CD4-positive, alpha-beta memory T cell (primary cell): ENCODE measurements at regions of chr1 and their contacts with region 1.

Region 1: GRCh38 chr1:8409106-8409505 is 91.2 kb downstream of the SLC45A1 start:
- DNase-seq: peak in 4 of 5 donors; percentile 33 to 37 (median 36)
- H3K4me3 ChIP-seq: no peak overlapping the region
- H3K4me3 Mint-ChIP-seq: peak overlapping the region; percentile 21 to 79 (median 64)
- H3K27ac ChIP-seq: peak overlapping the region; percentile 37
- H3K27ac Mint-ChIP-seq: peak overlapping the region; percentile 56 to 94 (median 79)
- H3K4me1 ChIP-seq: peaks cover 92% of the 10 kb centered on the region
- H3K4me1 Mint-ChIP-seq: peaks cover 59 to 92% (median 73%) of the 10 kb centered on the region in 4 donors
- H3K27me3 ChIP-seq: no peaks in the 10 kb centered on the region
- H3K27me3 Mint-ChIP-seq: no peaks in the 10 kb centered on the region

Region 2: GRCh38 chr1:8302081-8302956 is 106.8 kb before region 1 on chr1:
- CTCF ChIA-PET with region 1: no interaction called
- POLR2A ChIA-PET with region 1: no interaction called
- intact Hi-C with region 1: no loop called
- DNase-seq: no peak
- H3K4me3 ChIP-seq: no peak overlapping the region
- H3K4me3 Mint-ChIP-seq: no peak overlapping the region
- H3K27ac ChIP-seq: no peak overlapping the region
- H3K27ac Mint-ChIP-seq: peak overlapping the region in 2 of 7 donors; percentile 40 to 65
- H3K4me1 ChIP-seq: no peaks in the 10 kb centered on the region
- H3K4me1 Mint-ChIP-seq: no peaks in the 10 kb centered on the region
- H3K27me3 ChIP-seq: no peaks in the 10 kb centered on the region
- H3K27me3 Mint-ChIP-seq: peaks cover 0 to 7% of the 10 kb centered on the region in 2 donors

Region 3: GRCh38 chr1:8343464-8344001 is 65.6 kb before region 1 on chr1:
- CTCF ChIA-PET with region 1: no interaction called
- POLR2A ChIA-PET with region 1: no interaction called
- intact Hi-C with region 1: no loop called
- DNase-seq: no peak
- H3K4me3 ChIP-seq: no peak overlapping the region
- H3K4me3 Mint-ChIP-seq: no peak overlapping the region
- H3K27ac ChIP-seq: no peak overlapping the region
- H3K27ac Mint-ChIP-seq: no peak overlapping the region
- H3K4me1 ChIP-seq: no peaks in the 10 kb centered on the region
- H3K4me1 Mint-ChIP-seq: peaks cover 0 to 1% (median 0%) of the 10 kb centered on the region in 4 donors
- H3K27me3 ChIP-seq: no peaks in the 10 kb centered on the region
- H3K27me3 Mint-ChIP-seq: no peaks in the 10 kb centered on the region

Region 4: GRCh38 chr1:8396786-8397406 is 12.2 kb before region 1 on chr1:
- CTCF ChIA-PET with region 1: interaction called, 40 read pairs
- POLR2A ChIA-PET with region 1: no interaction called
- intact Hi-C with region 1: no loop called
- DNase-seq: peak in 3 of 5 donors; percentile 21 to 51 (median 23)
- H3K4me3 ChIP-seq: no peak overlapping the region
- H3K4me3 Mint-ChIP-seq: peak overlapping the region in 6 of 8 donors; percentile 12 to 92 (median 63)
- H3K27ac ChIP-seq: peak overlapping the region; percentile 14
- H3K27ac Mint-ChIP-seq: peak overlapping the region; percentile 47 to 96 (median 82)
- H3K4me1 ChIP-seq: peaks cover 67% of the 10 kb centered on the region
- H3K4me1 Mint-ChIP-seq: peaks cover 58 to 74% (median 67%) of the 10 kb centered on the region in 4 donors
- H3K27me3 ChIP-seq: no peaks in the 10 kb centered on the region
- H3K27me3 Mint-ChIP-seq: no peaks in the 10 kb centered on the region

Region 5: GRCh38 chr1:8423650-8424538 is 14.8 kb after region 1 on chr1:
- CTCF ChIA-PET with region 1: interaction called, 88 read pairs
- POLR2A ChIA-PET with region 1: interaction called, 57 read pairs
- intact Hi-C with region 1: loop called (anchors 1 kb)
- DNase-seq: peak; percentile 43 to 75 (median 49)
- H3K4me3 ChIP-seq: peak overlapping the region; percentile 15 to 89
- H3K4me3 Mint-ChIP-seq: peak overlapping the region; percentile 89 to 95 (median 93)
- H3K27ac ChIP-seq: peak overlapping the region; percentile 84
- H3K27ac Mint-ChIP-seq: peak overlapping the region; percentile 89 to 98 (median 95)
- H3K4me1 ChIP-seq: peaks cover 78% of the 10 kb centered on the region
- H3K4me1 Mint-ChIP-seq: peaks cover 38 to 45% (median 42%) of the 10 kb centered on the region in 4 donors
- H3K27me3 ChIP-seq: no peaks in the 10 kb centered on the region
- H3K27me3 Mint-ChIP-seq: no peaks in the 10 kb centered on the region

Region 6: GRCh38 chr1:8431019-8431418 is 21.9 kb after region 1 on chr1:
- CTCF ChIA-PET with region 1: interaction called, 22 read pairs
- POLR2A ChIA-PET with region 1: interaction called, 3 read pairs
- intact Hi-C with region 1: no loop called
- DNase-seq: peak in 4 of 5 donors; percentile 35 to 69 (median 42)
- H3K4me3 ChIP-seq: no peak overlapping the region
- H3K4me3 Mint-ChIP-seq: peak overlapping the region in 7 of 8 donors; percentile 45 to 82 (median 73)
- H3K27ac ChIP-seq: peak overlapping the region; percentile 53
- H3K27ac Mint-ChIP-seq: peak overlapping the region; percentile 60 to 91 (median 85)
- H3K4me1 ChIP-seq: peaks cover 60% of the 10 kb centered on the region
- H3K4me1 Mint-ChIP-seq: peaks cover 48 to 72% (median 58%) of the 10 kb centered on the region in 4 donors
- H3K27me3 ChIP-seq: no peaks in the 10 kb centered on the region
- H3K27me3 Mint-ChIP-seq: no peaks in the 10 kb centered on the region

Region 7: GRCh38 chr1:8443558-8444194 is 34.6 kb after region 1 on chr1:
- CTCF ChIA-PET with region 1: interaction called, 10 read pairs
- POLR2A ChIA-PET with region 1: no interaction called
- intact Hi-C with region 1: no loop called
- DNase-seq: no peak
- H3K4me3 ChIP-seq: no peak overlapping the region
- H3K4me3 Mint-ChIP-seq: no peak overlapping the region
- H3K27ac ChIP-seq: no peak overlapping the region
- H3K27ac Mint-ChIP-seq: no peak overlapping the region
- H3K4me1 ChIP-seq: no peaks in the 10 kb centered on the region
- H3K4me1 Mint-ChIP-seq: peaks cover 5 to 23% (median 11%) of the 10 kb centered on the region in 4 donors
- H3K27me3 ChIP-seq: no peaks in the 10 kb centered on the region
- H3K27me3 Mint-ChIP-seq: no peaks in the 10 kb centered on the region

Region 8: DNA sequence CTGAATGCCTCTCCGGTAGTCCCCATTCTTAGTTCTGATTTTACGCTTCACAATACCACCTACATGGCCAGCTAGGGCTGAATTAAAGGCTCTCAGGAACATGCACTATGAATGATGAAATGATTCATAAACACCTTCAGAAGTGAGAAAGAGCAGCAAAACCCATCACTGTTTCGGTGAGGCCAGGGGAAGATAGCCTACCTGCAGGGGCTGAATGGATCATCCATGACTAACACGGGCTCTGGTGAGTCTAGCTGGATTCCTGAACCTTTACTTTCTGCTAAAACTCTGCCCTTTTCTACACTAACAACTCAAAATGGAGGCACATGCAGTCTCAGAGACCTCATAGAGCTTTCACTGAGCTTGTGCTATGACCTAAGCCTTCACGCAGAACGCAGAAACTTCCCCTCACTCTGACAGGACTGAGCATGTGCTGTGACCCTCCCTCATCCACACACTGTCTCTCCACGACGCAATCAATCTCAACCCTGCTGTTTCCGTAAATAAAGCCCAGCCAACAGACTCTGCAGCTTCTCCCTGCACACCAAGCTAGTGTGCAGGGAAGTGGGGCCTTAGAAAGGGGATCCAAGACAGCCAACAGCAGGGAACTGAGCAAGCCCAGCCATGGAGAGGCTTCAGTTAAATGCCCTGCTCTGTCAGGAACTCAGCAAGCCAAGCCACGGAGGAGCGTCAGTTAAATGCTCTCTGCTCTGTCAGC is 116.6 kb after region 1 on chr1:
- CTCF ChIA-PET with region 1: interaction called, 4 read pairs
- POLR2A ChIA-PET with region 1: no interaction called
- intact Hi-C with region 1: loop called (anchors 1 kb)
- DNase-seq: peak; percentile 79 to 93 (median 85)
- H3K4me3 ChIP-seq: peak overlapping the region; percentile 44 to 63
- H3K4me3 Mint-ChIP-seq: no peak overlapping the region
- H3K27ac ChIP-seq: peak overlapping the region; percentile 78
- H3K27ac Mint-ChIP-seq: no peak overlapping the region
- H3K4me1 ChIP-seq: peaks cover 38% of the 10 kb centered on the region
- H3K4me1 Mint-ChIP-seq: peaks cover 21 to 43% (median 32%) of the 10 kb centered on the region in 4 donors
- H3K27me3 ChIP-seq: no peaks in the 10 kb centered on the region
- H3K27me3 Mint-ChIP-seq: no peaks in the 10 kb centered on the region

Region 9: DNA sequence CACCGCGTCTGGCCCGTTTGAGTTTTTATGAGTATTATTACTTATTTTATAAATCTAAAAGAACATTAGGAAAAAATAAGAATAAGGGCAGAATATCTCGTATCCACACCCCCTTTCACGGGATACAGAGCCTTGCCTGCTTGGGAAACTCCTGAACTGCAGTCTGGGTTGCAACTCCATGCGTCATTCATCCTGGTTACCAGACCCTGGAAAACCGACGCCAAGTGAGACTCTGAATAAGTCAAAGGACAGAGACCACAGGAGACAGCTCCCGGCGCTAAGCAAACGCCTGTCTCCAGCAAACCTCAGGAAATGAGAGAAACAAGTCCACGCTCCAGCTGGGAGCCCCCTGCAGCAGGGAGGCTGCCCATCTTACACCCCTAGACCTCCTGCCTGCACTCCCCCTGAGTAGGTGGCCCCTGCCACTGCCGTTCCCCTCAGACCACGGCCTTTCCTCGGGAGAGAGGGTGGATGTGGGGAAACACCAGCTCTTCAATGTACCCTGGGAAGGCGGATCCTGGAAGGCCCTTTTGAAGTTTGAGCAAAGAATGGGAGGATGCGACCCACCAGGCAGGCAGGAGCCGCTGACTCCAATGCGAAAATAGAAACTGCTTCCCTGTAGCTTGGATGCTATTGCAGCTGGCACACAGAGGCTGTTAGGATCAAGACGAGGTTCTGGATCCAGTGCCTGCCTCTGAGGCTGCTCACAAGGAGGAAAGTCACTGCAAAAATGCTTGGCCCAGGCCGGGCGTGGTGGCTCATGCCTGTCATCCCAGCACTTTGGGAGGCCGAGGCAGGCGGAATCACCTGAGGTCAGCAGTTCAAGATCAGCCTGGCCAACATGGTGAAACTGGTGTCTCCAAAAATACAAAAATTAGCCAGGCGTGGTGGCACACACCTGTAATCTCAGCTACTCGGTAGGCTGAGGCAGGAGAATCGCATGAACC is 757.5 kb after region 1 on chr1:
- CTCF ChIA-PET with region 1: no interaction called
- POLR2A ChIA-PET with region 1: no interaction called
- intact Hi-C with region 1: no loop called
- DNase-seq: no peak
- H3K4me3 ChIP-seq: no peak overlapping the region
- H3K4me3 Mint-ChIP-seq: no peak overlapping the region
- H3K27ac ChIP-seq: no peak overlapping the region
- H3K27ac Mint-ChIP-seq: no peak overlapping the region
- H3K4me1 ChIP-seq: no peaks in the 10 kb centered on the region
- H3K4me1 Mint-ChIP-seq: no peaks in the 10 kb centered on the region
- H3K27me3 ChIP-seq: no peaks in the 10 kb centered on the region
- H3K27me3 Mint-ChIP-seq: no peaks in the 10 kb centered on the region